Mucosa of descending colon (tissue), 3 donors: ENCODE measurements at regions of chr11 and their contacts with region 1.

Region 1: GRCh38 chr11:65506770-65507505 is 8.1 kb downstream of the MALAT1 start:
- DNase-seq: peak; percentile 61 to 68 (median 67)
- ATAC-seq: peak; percentile 35
- H3K4me3 ChIP-seq: no peak overlapping the region
- H3K4me1 ChIP-seq: peaks cover 26% of the 10 kb centered on the region
- CTCF ChIP-seq: no peak

Region 2: DNA sequence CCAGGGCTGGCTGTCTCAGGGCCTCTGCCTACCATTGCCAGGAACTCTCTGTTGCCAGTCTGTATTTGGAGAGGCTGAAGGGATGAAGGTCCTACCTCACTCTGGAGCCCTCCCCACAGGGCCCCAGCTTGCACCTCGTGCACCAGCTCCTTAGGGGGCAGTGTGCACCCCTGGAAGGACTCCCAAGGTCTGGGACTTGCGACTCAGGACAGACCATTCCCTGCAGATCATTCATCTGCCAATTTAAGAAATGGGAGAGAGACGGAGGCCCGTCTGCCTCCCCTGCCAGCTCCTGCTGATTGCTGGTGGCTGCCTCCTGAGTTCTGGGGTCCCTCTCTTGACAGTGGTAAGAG is 35.6 kb before region 1 on chr11:
- intact Hi-C with region 1: loop called in 1 of 2 experiments (anchors 5 kb)
- DNase-seq: peak; percentile 74 to 83 (median 75)
- ATAC-seq: peak; percentile 57
- H3K4me3 ChIP-seq: no peak overlapping the region
- H3K4me1 ChIP-seq: peaks cover 48% of the 10 kb centered on the region
- CTCF ChIP-seq: peak; percentile 48

Region 3: DNA sequence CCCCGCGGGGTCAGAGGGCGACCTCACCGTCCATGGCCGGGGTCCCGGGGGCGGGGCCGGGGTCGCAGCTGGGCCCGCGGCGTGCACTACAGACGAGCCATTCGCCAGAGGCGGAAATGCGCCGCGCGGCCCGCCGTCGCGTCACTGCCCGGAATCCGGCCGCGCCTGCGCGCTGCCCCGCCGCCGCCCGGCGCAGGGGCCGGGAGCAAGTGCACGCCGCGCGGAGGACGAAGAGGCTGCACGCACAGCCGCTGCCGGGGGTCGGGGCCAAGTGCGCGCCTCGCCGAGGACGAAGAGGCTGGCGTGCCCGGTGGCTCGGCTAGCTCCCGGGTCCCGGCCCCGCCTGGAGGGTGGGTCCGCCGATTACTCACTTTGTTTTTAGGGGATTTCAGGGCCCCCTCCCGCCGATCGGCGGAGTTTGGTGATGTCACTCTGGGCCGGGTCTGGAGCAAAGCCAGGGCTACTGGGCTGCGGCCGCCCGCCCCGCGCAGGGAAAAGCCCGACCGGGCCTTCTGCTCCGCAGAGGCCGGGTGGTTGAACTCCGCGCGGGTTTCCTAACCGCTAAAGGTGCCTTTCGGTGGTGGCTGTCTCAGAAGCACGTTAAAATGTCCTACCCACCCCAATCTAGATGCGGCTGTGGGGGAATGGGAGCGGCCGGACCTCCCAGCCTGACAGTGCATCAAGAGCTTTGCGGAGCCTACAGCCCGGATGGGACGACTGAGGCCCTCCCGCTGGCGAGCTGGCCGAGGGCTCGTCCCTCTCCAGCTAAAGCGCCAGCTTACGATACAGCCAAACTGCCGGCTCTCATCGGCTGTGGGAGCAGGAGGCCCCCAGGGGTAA is 156.1 kb after region 1 on chr11 and contains the start of gene RELA:
- intact Hi-C with region 1: no loop called
- DNase-seq: peak; percentile 94 to 95 (median 94)
- ATAC-seq: peak; percentile 95
- H3K4me3 ChIP-seq: peak within 1 kb of the TSS; percentile 86
- H3K4me1 ChIP-seq: peaks cover 15% of the 10 kb centered on the region
- CTCF ChIP-seq: no peak
- total RNA-seq, gene RELA: 69.1 to 89.6 (median 71.0) TPM